ENCODE measurements at regions of chr19 and their contacts with region 1.

Region 1: GRCh38 chr19:36772311-36773222 is at the start of gene ZNF850:
- DNase-seq: peak; percentile 88
- H3K4me3 Mint-ChIP-seq: peak within 1 kb of the TSS; percentile 98
- H3K27ac Mint-ChIP-seq: peak within 1 kb of the TSS; percentile 93
- H3K4me1 Mint-ChIP-seq: peaks cover 18% of the 10 kb centered on the region
- H3K27me3 Mint-ChIP-seq: no peaks in the 10 kb centered on the region
- total RNA-seq, gene ZNF850: 3.2 and 3.7 TPM in 2 replicates

Region 2: GRCh38 chr19:36418287-36419001 is 354.1 kb before region 1 on chr19 and contains the start of gene ZFP82:
- intact Hi-C with region 1: loop called (anchors 5 kb)
- DNase-seq: peak; percentile 73
- H3K4me3 Mint-ChIP-seq: peak within 1 kb of the TSS; percentile 93
- H3K27ac Mint-ChIP-seq: peak within 1 kb of the TSS; percentile 94
- H3K4me1 Mint-ChIP-seq: peaks cover 18% of the 10 kb centered on the region
- H3K27me3 Mint-ChIP-seq: peaks cover 5% of the 10 kb centered on the region
- total RNA-seq, gene ZFP82: 5.1 and 5.3 TPM in 2 replicates

Region 3: GRCh38 chr19:36573020-36573885 is 199.3 kb before region 1 on chr19 and contains the start of gene ZNF529:
- intact Hi-C with region 1: loop called (anchors 1 kb)
- DNase-seq: peak; percentile 85
- H3K4me3 Mint-ChIP-seq: peak within 1 kb of the TSS; percentile 89
- H3K27ac Mint-ChIP-seq: peak within 1 kb of the TSS; percentile 98
- H3K4me1 Mint-ChIP-seq: peaks cover 31% of the 10 kb centered on the region
- H3K27me3 Mint-ChIP-seq: no peaks in the 10 kb centered on the region
- total RNA-seq, gene ZNF529: 20.3 and 20.7 TPM in 2 replicates

Region 4: DNA sequence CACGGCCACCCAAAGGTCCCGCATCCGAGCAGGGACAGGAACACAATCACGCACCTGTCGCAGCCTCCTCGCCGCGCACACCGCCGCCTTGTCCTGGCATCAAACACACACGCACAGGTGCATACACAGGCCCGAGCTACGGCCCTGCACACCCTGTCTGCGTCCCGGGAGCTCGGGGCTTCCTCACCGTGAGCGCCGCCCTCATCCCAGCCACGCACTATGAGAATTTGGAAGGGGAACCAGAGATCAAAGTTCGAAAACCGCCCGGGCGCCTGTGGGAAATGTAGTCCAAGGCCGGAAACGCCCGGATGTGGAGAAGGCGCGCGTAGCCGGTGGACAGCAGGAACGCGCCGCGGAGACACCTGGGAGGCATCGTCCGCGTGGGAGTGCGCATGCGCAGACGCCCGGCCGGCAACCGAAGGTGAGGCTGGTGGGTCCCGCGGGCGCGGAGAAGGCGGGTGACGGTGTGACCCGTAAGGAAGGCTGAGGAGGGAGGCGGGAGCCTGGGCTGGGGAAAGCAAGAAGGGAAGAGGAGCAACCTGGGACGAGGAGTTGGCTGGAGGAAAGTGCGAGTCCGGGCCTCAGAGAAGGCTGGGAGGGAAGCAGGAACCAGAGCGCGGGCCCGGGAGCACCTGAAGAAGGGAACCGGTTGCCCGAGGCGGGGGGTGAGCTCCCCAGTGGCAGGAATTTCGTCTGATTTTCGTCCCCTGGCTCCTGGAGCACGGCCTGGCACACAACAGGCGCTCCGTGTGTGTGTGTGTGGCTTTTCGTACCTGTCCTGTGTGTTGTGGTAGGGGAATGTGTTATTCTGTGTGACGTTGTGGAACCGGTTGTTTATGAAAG is 85.1 kb before region 1 on chr19 and contains the start of gene ZNF567:
- intact Hi-C with region 1: loop called (anchors 1 kb)
- DNase-seq: peak; percentile 97
- H3K4me3 Mint-ChIP-seq: peak within 1 kb of the TSS; percentile 95
- H3K27ac Mint-ChIP-seq: peak within 1 kb of the TSS; percentile 91
- H3K4me1 Mint-ChIP-seq: peaks cover 24% of the 10 kb centered on the region
- H3K27me3 Mint-ChIP-seq: peaks cover 2% of the 10 kb centered on the region
- total RNA-seq, gene ZNF567: 5.8 and 8.5 TPM in 2 replicates

Region 5: DNA sequence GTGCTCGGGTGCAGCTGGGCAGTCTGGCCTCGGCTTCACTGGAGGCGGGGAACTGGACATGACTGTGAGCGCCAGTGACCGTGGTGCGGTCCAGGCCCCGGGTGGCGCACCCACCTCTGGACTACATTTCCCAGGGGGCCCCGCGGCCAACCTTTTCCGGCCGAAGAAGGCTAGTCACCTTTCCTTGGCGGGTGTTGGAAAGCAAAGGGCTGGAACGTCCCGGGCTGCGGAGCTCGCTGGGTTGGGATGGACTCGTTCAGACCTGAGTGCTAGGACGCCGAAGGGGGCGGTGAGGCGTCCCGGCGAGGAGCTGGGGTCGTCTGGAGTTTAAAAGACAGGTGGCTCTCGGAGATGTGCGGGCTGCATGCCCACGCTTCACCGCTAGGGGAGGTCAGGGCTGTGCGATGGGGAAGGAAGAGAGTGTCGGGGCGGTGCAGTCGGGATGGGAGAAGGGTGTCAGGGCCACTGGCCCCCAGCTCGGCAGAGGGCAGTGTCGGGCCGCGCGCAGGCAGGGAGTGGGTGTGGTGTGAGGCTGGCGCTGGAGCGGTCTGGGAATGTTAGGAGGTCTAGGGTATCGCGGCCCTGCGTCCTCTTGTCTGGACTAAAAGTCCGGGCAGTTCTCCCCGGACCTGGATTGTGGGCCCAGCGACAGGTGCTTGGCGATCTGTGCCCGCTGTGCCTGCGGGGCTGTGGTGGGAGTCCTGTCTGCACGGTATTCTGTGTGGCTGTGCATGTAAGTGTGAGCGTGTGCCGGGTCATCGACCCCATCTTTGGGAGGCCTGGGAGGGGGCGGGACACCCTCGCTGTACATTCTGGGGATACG is 200.7 kb after region 1 on chr19:
- intact Hi-C with region 1: loop called (anchors 1 kb)
- DNase-seq: peak; percentile 67
- H3K4me3 Mint-ChIP-seq: peak overlapping the region; percentile 98
- H3K27ac Mint-ChIP-seq: peak overlapping the region; percentile 87
- H3K4me1 Mint-ChIP-seq: peaks cover 12% of the 10 kb centered on the region
- H3K27me3 Mint-ChIP-seq: no peaks in the 10 kb centered on the region

Region 6: DNA sequence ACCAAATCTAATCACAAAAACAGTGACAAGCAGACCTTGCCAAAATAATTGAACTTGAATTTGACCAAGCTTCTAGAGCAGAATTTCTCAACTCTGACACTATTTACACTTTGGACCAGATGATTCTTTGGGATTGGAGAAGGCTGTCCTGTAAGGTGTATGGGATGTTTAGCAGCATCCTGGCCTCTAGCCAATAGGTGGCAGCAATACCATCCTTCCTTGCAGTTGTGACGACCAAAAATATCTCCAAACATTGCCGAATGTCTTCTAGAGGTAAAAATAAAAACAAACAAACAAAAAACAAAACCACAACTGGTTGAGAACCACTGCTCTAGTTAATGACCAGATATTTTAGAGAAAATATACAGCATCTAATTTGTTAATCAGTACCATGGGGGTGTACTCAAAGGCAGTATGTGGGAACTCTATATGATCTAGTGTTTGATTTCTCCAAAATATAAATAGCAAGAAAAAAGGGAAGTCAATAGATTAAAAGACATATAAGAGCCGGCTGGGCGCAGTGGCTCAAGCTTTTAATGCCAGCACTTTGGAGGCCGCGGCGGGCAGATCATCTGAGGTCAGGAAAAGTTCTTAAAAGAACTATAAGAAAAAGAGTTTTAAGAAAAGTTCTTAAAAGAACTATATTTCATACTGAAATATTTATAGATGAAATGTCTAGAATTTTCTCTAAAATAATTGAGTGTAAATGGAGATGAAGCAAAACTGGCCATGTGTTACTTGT is 537.4 kb after region 1 on chr19:
- intact Hi-C with region 1: loop called (anchors 10 kb)
- DNase-seq: no peak
- H3K4me3 Mint-ChIP-seq: no peak overlapping the region
- H3K27ac Mint-ChIP-seq: no peak overlapping the region
- H3K4me1 Mint-ChIP-seq: peaks cover 10% of the 10 kb centered on the region
- H3K27me3 Mint-ChIP-seq: no peaks in the 10 kb centered on the region

Region 7: DNA sequence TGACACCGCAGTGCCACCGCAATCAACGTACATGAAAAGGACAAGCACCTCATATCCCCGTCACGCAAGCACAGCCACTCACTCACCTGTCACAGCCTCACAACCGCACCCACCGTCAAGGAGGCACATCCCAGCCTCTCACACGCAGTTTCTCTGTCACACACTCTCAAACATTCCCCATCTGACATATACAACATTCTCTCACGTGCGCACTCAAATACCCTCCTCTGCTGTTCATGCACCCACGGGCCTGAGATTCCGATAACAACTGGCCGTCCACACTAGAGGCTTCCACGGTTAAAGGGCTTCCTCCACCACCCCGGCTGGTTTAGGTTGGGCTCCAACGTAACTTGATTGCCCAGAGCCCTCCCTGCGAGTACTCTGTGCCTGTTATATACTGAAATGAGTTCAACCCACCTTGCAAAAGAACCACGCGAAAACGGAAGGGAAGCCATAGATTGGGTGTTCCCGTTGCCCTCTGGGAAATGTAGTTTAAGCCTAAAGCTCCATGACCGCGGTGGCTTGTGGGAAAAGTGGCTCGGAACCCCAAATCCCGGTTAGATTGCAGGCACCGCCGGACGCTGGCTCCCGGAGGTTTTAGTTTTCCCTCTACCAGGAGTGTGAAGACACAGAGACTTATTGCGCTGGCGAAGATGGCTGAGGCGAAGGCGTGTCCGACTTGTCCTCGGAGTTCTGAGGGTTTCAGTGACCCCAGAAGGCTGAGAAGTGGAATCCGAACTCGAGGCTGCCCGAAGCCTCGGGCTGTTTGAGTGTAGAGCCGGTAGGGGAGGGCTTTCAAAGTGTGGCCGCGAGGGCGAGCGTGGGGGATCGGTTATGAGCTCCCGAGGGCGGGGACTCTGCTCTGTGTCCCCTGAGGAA is 1006.8 kb after region 1 on chr19 and contains the start of gene ZNF573:
- intact Hi-C with region 1: loop called (anchors 5 kb)
- DNase-seq: peak; percentile 73
- H3K4me3 Mint-ChIP-seq: peak within 1 kb of the TSS; percentile 95
- H3K27ac Mint-ChIP-seq: peak within 1 kb of the TSS; percentile 86
- H3K4me1 Mint-ChIP-seq: peaks cover 15% of the 10 kb centered on the region
- H3K27me3 Mint-ChIP-seq: no peaks in the 10 kb centered on the region
- total RNA-seq, gene ZNF573: 3.7 and 5.6 TPM in 2 replicates

Measured in activated T-helper 1 cell treated with anti-CD3 and anti-CD28 coated beads, Interleukin-12 subunit alpha, Interleukin-12 subunit beta, Interleukin-2, Interleukin-4 antibody, amounts not matched to agents 30 ng/mL and 10 ng/mL and 1 ng/mL, durations not matched to agents 14 hours and 24 hours and 36 hours (primary cell).